ENCODE measurements at regions of chr11 and their contacts with region 1.

Region 1: GRCh38 chr11:67345920-67346799 is 7.2 kb downstream of the POLD4 start:
- DNase-seq: no peak
- ATAC-seq: peak; percentile 51
- H3K4me3 Mint-ChIP-seq: no peak overlapping the region
- H3K27ac Mint-ChIP-seq: peak overlapping the region; percentile 21
- H3K4me1 Mint-ChIP-seq: peaks cover 30% of the 10 kb centered on the region
- H3K27me3 Mint-ChIP-seq: no peaks in the 10 kb centered on the region

Region 2: DNA sequence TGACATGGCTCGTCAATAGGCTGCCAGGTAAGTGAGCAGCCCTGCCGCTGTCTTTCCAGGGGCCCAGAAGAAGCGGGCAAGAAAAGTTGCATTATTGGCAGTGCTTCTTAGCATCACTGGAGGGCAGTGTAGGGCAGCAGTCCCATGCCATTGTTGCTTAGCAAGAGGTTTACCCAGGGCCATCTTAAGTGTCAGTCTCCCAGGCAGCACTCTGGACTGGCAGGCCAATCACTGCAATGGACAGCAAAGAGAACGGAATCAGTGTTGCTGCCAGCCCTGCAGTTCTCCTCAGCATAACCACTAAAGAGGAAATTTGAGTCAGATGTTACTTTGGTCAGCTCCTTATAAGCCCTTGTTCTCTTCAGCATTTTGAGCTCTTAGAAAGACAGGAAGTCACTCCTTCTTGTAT is 93.3 kb before region 1 on chr11:
- CTCF ChIA-PET with region 1: interaction called, 19 read pairs
- POLR2A ChIA-PET with region 1: no interaction called
- DNase-seq: peak; percentile 65
- ATAC-seq: peak; percentile 80
- H3K4me3 Mint-ChIP-seq: no peak overlapping the region
- H3K27ac Mint-ChIP-seq: peak overlapping the region; percentile 48
- H3K4me1 Mint-ChIP-seq: peaks cover 46% of the 10 kb centered on the region
- H3K27me3 Mint-ChIP-seq: no peaks in the 10 kb centered on the region

Region 3: DNA sequence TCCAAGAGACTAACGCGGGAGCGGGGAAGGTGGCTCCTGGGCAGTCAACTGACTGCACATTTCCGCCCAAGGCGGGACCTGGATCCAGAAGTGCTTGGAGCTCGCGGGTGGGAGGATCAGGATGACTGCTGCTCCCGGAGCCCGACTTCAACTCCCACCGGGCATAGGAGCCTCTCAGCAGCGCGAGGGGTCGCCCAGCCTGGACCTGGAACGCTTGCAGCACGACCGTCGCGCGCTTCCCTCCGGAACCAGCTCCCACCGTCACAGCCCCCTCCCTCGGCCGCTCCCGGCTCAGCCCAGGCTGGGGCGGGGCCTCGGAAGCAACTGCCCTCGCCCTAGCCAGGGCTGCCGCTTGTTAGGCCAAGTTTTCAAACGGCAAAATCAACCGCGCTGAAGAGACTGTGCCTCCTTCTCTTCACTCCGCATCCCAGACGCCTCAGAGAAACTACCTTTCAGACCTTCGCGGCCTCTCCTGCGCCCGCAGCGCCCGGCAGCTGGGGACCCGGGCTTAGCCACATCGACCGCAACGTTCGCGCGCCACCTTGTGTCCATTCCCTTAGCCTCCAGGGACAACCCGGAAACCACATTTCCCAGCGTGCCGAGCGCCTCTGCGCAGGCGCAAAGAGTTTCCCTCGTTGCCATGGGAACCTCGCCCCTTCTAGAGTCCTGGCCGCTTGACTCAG is 28.8 kb before region 1 on chr11:
- CTCF ChIA-PET with region 1: interaction called, 76 read pairs
- POLR2A ChIA-PET with region 1: interaction called, 7 read pairs
- DNase-seq: peak; percentile 99
- ATAC-seq: peak; percentile 91
- H3K4me3 Mint-ChIP-seq: peak overlapping the region; percentile 91
- H3K27ac Mint-ChIP-seq: peak overlapping the region; percentile 99
- H3K4me1 Mint-ChIP-seq: peaks cover 27% of the 10 kb centered on the region
- H3K27me3 Mint-ChIP-seq: peaks cover 2% of the 10 kb centered on the region

Region 4: DNA sequence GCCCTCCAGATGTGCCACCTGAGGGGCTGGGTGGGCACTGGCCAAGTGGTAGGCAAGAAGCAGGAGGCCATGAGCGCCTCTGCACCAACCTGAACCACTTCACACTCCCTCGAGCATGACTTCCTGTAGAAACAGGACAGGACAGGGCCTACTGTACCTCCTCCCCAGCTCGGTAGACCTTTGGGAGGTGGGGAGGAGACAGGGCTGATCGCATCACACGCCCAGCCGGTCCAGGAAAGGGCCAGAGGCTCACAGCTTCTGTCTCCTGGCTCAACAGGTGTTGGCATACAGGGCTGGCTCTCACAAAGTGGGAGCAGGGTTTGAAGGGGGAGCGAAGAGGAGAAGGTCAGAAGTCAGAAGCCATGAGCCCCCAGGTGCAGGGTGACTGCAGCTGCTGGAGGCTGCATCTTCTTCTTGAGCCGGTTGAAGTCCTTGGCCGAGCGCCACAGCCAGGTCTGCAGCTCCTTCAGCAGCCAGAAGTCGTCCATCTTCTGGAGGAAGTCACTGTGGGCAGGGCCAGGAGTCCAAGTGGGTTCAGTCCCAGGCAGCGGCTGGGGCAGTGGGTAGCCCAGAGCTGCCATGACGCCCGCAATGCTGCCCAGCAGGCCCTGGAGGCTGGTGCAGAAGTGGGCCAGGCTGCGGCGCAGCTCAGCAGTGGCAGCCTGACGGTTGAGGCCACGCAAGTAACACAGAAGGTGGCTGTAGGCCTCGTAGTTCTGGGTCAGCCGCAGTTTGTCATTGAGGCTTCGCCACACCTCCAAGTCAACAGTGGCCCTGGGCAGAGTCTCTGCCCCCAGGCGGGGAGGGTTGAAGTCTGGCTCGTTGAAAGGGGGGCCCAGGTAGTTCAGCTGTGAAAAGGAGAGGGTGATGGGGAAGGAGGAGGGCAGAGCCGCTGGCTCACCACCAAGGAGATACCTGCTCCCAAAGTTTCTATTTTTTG is 18.9 kb after region 1 on chr11:
- CTCF ChIA-PET with region 1: interaction called, 998 read pairs
- POLR2A ChIA-PET with region 1: interaction called, 3 read pairs
- DNase-seq: no peak
- ATAC-seq: no peak
- H3K4me3 Mint-ChIP-seq: no peak overlapping the region
- H3K27ac Mint-ChIP-seq: no peak overlapping the region
- H3K4me1 Mint-ChIP-seq: peaks cover 41% of the 10 kb centered on the region
- H3K27me3 Mint-ChIP-seq: peaks cover 46% of the 10 kb centered on the region

Region 5: GRCh38 chr11:67382276-67383136 is 36.3 kb after region 1 on chr11:
- CTCF ChIA-PET with region 1: interaction called, 998 read pairs
- POLR2A ChIA-PET with region 1: interaction called, 8 read pairs
- DNase-seq: peak; percentile 90
- ATAC-seq: peak; percentile 97
- H3K4me3 Mint-ChIP-seq: no peak overlapping the region
- H3K27ac Mint-ChIP-seq: no peak overlapping the region
- H3K4me1 Mint-ChIP-seq: peaks cover 7% of the 10 kb centered on the region
- H3K27me3 Mint-ChIP-seq: peaks cover 19% of the 10 kb centered on the region

Region 6: DNA sequence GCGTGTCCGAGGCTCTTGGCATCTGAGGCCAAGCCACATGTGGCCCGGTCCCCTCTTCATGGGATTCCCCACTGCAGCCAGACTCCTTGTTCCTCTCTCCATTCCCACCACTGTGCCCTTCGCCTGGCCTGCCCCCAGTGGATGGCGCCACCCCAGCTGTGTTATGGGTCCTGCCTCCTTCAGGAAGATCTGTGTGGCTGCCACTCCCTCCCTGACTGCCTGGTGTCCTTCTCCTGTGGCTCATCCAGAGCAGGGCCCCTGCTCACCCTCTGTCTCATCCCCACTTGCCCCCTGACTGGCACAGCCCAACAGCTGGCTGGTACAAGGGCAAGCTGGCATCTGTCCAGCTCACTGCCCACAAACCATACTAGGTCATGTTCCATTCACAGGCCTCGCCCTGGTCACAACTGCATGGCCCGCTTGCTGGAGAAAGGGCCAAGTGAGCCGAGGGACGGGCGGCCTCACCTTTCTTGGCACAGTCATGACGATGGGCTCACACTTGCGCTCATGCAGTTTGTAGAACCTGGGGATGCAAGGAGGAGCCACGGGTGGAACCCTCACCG is 93.2 kb after region 1 on chr11:
- CTCF ChIA-PET with region 1: interaction called, 12 read pairs
- POLR2A ChIA-PET with region 1: no interaction called
- DNase-seq: peak; percentile 61
- ATAC-seq: no peak
- H3K4me3 Mint-ChIP-seq: peak overlapping the region; percentile 84
- H3K27ac Mint-ChIP-seq: peak overlapping the region; percentile 96
- H3K4me1 Mint-ChIP-seq: peaks cover 56% of the 10 kb centered on the region
- H3K27me3 Mint-ChIP-seq: no peaks in the 10 kb centered on the region

Measured in activated CD8-positive, alpha-beta T cell treated with anti-CD3 and anti-CD28 coated beads, Interleukin-2, amount 10 ng/mL, durations not matched to agents 7 days and 5 days (primary cell).